Activated CD4-positive, alpha-beta memory T cell treated with anti-CD3 and anti-CD28 coated beads, Interleukin-2, amount 10 ng/mL, durations not matched to agents 7 days and 5 days (primary cell): ENCODE measurements at regions of chr17 and their contacts with region 1.

Region 1: DNA sequence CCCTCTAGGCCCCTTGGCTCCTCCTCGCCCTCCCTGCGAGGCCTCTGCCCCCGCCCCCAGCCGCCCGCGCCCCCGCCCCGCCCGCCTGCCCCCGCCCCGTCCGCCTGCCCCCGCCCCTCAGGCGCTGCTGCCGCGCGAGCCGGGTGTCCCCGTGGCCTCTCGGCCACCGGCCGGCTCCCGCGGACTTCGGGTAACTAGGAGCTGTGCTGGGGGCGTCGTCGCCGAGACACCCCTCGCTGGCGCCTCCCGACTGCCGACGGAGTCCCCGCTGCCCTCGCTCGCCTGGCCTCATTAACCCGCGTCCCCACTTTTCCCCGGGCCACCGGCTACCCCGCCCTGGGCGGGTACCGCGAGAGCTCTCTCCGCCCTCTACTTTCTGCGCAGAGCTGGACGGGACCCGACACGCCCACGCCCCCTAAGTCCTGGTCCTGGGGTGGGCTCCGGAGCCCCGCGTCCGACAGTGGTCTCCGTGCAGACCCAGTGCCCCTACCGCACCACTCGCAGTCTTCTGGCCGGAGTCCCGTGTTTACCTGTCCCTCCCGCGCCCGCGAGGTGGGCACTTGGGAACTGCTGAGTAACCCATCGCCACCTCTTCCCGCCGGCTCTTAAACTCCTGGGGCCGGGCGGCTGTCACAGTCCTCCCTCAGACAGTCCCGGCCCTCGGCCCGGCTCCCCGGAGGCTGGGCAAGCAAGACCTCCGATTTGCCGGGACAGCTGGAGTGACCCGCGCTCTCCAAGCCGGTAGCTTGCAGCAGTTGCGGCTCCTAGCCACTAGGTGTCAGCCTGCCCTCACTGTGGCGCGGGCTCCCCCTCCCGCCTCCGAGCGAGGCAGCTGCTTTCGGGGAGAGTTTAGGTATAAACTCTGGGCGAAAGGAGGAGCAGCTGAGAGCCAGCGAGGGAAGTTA is at the start of gene TLCD1:
- DNase-seq: peak; percentile 93
- H3K4me3 Mint-ChIP-seq: peak within 1 kb of the TSS; percentile 95
- H3K27ac Mint-ChIP-seq: peak within 1 kb of the TSS; percentile 98
- H3K4me1 Mint-ChIP-seq: peaks cover 62% of the 10 kb centered on the region
- H3K27me3 Mint-ChIP-seq: no peaks in the 10 kb centered on the region
- total RNA-seq, gene TLCD1: 1.4 to 2.3 TPM

Region 2: GRCh38 chr17:28644985-28645939 is 81.2 kb before region 1 on chr17 and contains the start of gene BLTP2:
- CTCF ChIA-PET with region 1: interaction called, 30 read pairs
- POLR2A ChIA-PET with region 1: interaction called, 32 read pairs
- DNase-seq: peak; percentile 97
- H3K4me3 Mint-ChIP-seq: peak within 1 kb of the TSS; percentile 93
- H3K27ac Mint-ChIP-seq: peak within 1 kb of the TSS; percentile 86
- H3K4me1 Mint-ChIP-seq: peaks cover 42% of the 10 kb centered on the region
- H3K27me3 Mint-ChIP-seq: no peaks in the 10 kb centered on the region
- total RNA-seq, gene BLTP2: 120 to 128 TPM

Region 3: GRCh38 chr17:28750178-28751047 is 23.9 kb after region 1 on chr17:
- CTCF ChIA-PET with region 1: interaction called, 458 read pairs
- POLR2A ChIA-PET with region 1: interaction called, 426 read pairs
- DNase-seq: peak; percentile 91
- H3K4me3 Mint-ChIP-seq: no peak overlapping the region
- H3K27ac Mint-ChIP-seq: no peak overlapping the region
- H3K4me1 Mint-ChIP-seq: peaks cover 35% of the 10 kb centered on the region
- H3K27me3 Mint-ChIP-seq: no peaks in the 10 kb centered on the region

Region 4: GRCh38 chr17:28788100-28788499 is 61.6 kb after region 1 on chr17:
- CTCF ChIA-PET with region 1: no interaction called
- POLR2A ChIA-PET with region 1: no interaction called
- DNase-seq: no peak
- H3K4me3 Mint-ChIP-seq: no peak overlapping the region
- H3K27ac Mint-ChIP-seq: no peak overlapping the region
- H3K4me1 Mint-ChIP-seq: no peaks in the 10 kb centered on the region
- H3K27me3 Mint-ChIP-seq: no peaks in the 10 kb centered on the region

Region 5: DNA sequence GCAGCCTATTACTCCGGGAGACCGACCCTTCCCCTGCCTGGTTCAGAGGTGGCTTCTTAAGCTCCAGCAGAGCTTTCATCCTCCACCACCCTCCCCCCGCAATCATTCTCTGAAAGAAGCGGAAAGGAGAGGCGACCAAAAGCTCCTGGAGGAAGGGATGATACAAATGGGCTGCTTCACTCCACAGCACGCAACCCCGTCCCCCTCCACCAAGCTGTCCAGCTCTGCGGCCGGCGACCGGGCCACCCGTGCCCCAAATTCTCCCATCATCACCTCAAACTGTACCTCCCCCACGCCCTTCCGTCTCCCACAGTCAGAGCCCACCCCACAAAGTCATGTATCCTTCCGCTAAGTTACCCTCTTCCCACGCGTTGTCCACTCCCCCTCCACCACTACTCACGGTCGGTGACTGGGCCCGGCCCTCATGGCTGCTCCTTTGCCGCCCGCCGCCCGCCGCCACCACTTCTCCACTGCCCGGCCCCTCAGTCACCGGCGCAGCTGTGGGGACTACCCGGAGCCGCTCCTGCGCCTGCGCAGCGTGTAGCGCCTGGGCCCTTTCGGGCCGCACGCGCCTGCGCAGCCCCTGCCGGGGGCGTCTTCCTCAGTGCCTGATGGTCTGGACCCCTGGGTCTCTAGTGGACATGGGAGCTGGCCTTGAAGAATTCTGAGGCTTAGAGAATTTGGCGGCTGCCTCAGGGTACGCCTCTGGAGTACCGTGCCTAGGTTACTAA is 116.0 kb after region 1 on chr17 and contains the start of gene FAM222B:
- CTCF ChIA-PET with region 1: interaction called, 15 read pairs
- POLR2A ChIA-PET with region 1: interaction called, 12 read pairs
- DNase-seq: peak; percentile 88
- H3K4me3 Mint-ChIP-seq: peak within 1 kb of the TSS; percentile 100
- H3K27ac Mint-ChIP-seq: peak within 1 kb of the TSS; percentile 88
- H3K4me1 Mint-ChIP-seq: peaks cover 26% of the 10 kb centered on the region
- H3K27me3 Mint-ChIP-seq: no peaks in the 10 kb centered on the region
- total RNA-seq, gene FAM222B: 15.5 to 17.1 TPM

Region 6: DNA sequence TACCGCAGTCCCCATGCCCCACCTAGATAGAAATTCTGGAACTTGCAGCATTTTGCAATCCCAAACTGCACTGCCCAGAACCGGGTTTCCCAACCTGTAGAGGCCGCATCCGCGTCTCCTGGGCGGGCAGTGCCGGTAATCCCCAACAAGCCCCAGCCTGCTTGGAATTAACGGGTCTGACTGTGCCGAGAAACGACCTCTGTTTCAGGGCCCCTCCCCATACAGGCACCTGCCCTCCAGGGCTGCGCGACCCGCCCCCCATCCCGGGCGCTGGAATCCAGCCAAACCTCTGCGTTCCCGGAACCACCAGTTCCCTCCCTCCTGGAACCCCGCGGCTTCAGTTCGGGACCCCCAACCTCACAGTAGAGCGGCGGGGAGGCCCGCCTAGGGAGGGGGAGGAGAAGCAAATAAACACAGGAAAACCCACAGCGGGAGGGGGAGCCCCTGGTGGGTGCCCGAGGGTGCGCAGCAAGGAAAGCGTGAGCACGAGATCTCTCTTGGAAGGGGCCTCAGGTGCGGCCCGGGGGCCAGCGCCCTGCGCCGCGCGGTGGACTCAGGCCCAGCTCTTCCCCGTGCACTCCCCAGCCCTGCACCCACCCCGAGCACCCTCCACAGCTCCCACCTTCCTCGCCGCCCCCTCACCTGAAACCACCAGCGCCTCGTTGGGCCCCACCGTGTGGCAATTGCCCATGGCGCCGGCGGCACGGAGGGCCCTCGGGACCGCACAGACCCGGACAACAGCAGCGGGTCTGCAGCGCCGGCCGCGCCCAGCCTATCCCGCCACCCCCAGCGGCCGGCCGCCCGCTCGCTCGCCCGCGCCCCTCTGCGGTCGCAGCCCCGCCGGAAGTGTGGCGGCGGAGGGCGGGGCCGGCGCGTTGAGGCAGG is 170.6 kb after region 1 on chr17 and contains the start of gene FLOT2:
- CTCF ChIA-PET with region 1: interaction called, 46 read pairs
- POLR2A ChIA-PET with region 1: interaction called, 24 read pairs
- DNase-seq: peak; percentile 69
- H3K4me3 Mint-ChIP-seq: peak within 1 kb of the TSS; percentile 96
- H3K27ac Mint-ChIP-seq: peak within 1 kb of the TSS; percentile 95
- H3K4me1 Mint-ChIP-seq: peaks cover 78% of the 10 kb centered on the region
- H3K27me3 Mint-ChIP-seq: no peaks in the 10 kb centered on the region
- total RNA-seq, gene FLOT2: 193 to 200 TPM

Region 7: GRCh38 chr17:28916302-28916934 is 189.9 kb after region 1 on chr17:
- CTCF ChIA-PET with region 1: interaction called, 27 read pairs
- POLR2A ChIA-PET with region 1: interaction called, 4 read pairs
- DNase-seq: peak; percentile 46
- H3K4me3 Mint-ChIP-seq: no peak overlapping the region
- H3K27ac Mint-ChIP-seq: no peak overlapping the region
- H3K4me1 Mint-ChIP-seq: peaks cover 8% of the 10 kb centered on the region
- H3K27me3 Mint-ChIP-seq: no peaks in the 10 kb centered on the region

Region 8: GRCh38 chr17:28946239-28946638 is 219.8 kb after region 1 on chr17:
- CTCF ChIA-PET with region 1: interaction called, 93 read pairs
- POLR2A ChIA-PET with region 1: interaction called, 90 read pairs
- DNase-seq: no peak
- H3K4me3 Mint-ChIP-seq: no peak overlapping the region
- H3K27ac Mint-ChIP-seq: peak overlapping the region; percentile 50
- H3K4me1 Mint-ChIP-seq: peaks cover 59% of the 10 kb centered on the region
- H3K27me3 Mint-ChIP-seq: no peaks in the 10 kb centered on the region